ENCODE measurements at regions of chr1 and their contacts with region 1.

Region 1: GRCh38 chr1:109773146-109773899 is 9.6 kb upstream of the EPS8L3 start:
- DNase-seq: peak; percentile 79
- H3K4me3 Mint-ChIP-seq: no peak overlapping the region
- H3K27ac Mint-ChIP-seq: no peak overlapping the region
- H3K4me1 Mint-ChIP-seq: peaks cover 17% of the 10 kb centered on the region
- H3K27me3 Mint-ChIP-seq: peaks cover 7% of the 10 kb centered on the region

Region 2: DNA sequence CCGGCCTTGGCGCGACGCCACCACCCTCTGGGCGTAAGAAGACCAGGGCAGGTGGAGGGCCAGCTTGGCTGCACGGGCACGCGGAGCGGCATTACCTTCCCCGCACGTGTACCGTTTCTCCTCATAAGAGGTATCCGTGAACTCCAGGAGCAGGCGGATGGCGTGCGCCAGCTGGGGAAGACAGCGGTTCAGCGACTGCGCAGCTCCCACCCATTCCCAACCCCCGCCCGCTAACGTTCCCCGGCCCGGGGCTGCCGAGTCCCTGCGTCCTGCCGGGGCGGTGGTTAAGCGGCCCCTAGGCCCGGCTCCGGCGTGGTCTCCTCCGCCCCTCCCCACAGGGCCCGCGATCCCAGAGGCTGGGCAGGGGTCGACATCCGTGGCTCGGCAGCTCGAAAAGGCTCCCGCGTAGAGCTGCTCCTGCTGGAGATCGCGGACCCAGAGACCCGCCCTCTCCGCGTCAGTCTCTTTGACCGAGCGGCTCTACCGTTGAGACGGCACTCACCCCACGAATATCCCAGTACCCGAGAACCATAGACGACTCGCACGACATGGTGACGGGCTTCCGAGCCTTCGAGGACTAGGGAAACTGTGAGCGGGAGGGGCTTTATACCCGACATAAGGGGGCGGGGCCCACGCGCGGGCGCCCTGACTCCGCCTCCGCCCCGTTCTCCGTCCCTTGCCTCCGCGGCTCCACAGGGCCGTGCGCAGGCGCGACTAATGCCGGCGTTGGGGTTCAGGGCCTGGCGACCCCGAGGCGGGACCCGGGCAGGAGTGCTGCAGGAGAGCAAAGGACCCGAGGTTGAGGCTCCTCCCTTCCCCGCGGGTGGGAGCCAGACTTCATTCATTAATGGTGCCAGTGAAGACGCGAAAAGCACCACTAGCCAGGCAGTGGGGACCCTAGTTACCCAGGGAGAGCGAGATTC is 33.3 kb before region 1 on chr1:
- CTCF ChIA-PET with region 1: no interaction called
- POLR2A ChIA-PET with region 1: no interaction called
- DNase-seq: peak; percentile 77
- H3K4me3 Mint-ChIP-seq: peak overlapping the region; percentile 68
- H3K27ac Mint-ChIP-seq: no peak overlapping the region
- H3K4me1 Mint-ChIP-seq: peaks cover 11% of the 10 kb centered on the region
- H3K27me3 Mint-ChIP-seq: peaks cover 57% of the 10 kb centered on the region

Region 3: GRCh38 chr1:109838838-109839240 is 65.5 kb after region 1 on chr1:
- CTCF ChIA-PET with region 1: no interaction called
- POLR2A ChIA-PET with region 1: no interaction called
- DNase-seq: no peak
- H3K4me3 Mint-ChIP-seq: no peak overlapping the region
- H3K27ac Mint-ChIP-seq: no peak overlapping the region
- H3K4me1 Mint-ChIP-seq: peaks cover 6% of the 10 kb centered on the region
- H3K27me3 Mint-ChIP-seq: peaks cover 5% of the 10 kb centered on the region

Region 4: GRCh38 chr1:110011527-110012041 is 238.3 kb after region 1 on chr1:
- CTCF ChIA-PET with region 1: interaction called, 29 read pairs
- POLR2A ChIA-PET with region 1: interaction called, 5 read pairs
- DNase-seq: peak; percentile 45
- H3K4me3 Mint-ChIP-seq: no peak overlapping the region
- H3K27ac Mint-ChIP-seq: peak overlapping the region; percentile 41
- H3K4me1 Mint-ChIP-seq: peaks cover 5% of the 10 kb centered on the region
- H3K27me3 Mint-ChIP-seq: no peaks in the 10 kb centered on the region

Measured in activated CD4-positive, alpha-beta memory T cell treated with anti-CD3 and anti-CD28 coated beads, Interleukin-2, amount 10 ng/mL, durations not matched to agents 7 days and 5 days (primary cell).